Activated CD4-positive, alpha-beta T cell treated with anti-CD3 and anti-CD28 coated beads, Interleukin-2, amount 10 ng/mL, durations not matched to agents 7 days and 5 days (primary cell): ENCODE measurements at regions of chr9 and their contacts with region 1.

Region 1: GRCh38 chr9:36407122-36407723 is 7.2 kb upstream of the RNF38 start:
- DNase-seq: peak; percentile 72
- H3K4me3 Mint-ChIP-seq: no peak overlapping the region
- H3K27ac Mint-ChIP-seq: peak overlapping the region; percentile 65
- H3K4me1 Mint-ChIP-seq: peaks cover 10% of the 10 kb centered on the region
- H3K27me3 Mint-ChIP-seq: no peaks in the 10 kb centered on the region

Region 2: DNA sequence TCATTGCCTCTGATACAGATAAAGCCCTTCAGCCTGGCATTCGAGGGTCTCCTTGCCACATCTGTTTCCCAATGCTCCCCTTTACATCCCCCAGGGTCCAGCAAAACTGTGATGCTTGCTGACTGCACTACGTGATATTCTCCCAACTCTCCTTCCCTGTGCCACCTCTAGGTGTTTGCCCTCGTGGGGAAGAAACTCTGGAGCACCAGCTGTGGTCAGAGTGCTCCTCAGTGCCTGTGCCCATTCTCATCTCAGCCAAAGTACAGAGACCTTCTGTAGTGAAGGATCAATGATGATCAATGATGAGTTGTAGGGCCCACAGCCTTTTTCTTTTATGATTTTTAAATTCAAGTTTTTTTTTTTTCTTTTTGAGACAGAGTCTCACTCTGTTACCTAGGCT is 125.1 kb after region 1 on chr9:
- CTCF ChIA-PET with region 1: no interaction called
- POLR2A ChIA-PET with region 1: interaction called, 10 read pairs
- DNase-seq: no peak
- H3K4me3 Mint-ChIP-seq: no peak overlapping the region
- H3K27ac Mint-ChIP-seq: no peak overlapping the region
- H3K4me1 Mint-ChIP-seq: no peaks in the 10 kb centered on the region
- H3K27me3 Mint-ChIP-seq: peaks cover 3% of the 10 kb centered on the region

Region 3: DNA sequence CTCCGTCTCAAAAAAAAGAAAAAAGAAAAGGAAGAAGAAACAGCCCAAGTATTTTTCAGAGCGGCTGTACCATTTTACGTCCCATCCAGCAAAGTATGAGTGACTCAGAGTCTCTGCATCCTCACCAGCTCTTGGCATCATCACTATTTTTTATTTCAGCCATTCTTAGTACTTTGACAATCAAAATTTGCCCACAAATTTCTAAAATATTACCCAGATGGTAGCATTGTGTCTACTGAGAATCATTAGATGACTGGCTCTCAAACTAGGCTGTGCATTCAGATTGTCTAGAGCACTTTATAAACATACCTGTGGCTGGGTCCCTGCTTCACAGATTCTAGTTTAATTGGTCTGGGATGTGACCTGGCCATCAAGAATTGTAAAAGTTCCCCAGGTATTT is 143.9 kb after region 1 on chr9:
- CTCF ChIA-PET with region 1: interaction called, 39 read pairs
- POLR2A ChIA-PET with region 1: no interaction called
- DNase-seq: no peak
- H3K4me3 Mint-ChIP-seq: no peak overlapping the region
- H3K27ac Mint-ChIP-seq: no peak overlapping the region
- H3K4me1 Mint-ChIP-seq: peaks cover 2% of the 10 kb centered on the region
- H3K27me3 Mint-ChIP-seq: peaks cover 21% of the 10 kb centered on the region

Region 4: DNA sequence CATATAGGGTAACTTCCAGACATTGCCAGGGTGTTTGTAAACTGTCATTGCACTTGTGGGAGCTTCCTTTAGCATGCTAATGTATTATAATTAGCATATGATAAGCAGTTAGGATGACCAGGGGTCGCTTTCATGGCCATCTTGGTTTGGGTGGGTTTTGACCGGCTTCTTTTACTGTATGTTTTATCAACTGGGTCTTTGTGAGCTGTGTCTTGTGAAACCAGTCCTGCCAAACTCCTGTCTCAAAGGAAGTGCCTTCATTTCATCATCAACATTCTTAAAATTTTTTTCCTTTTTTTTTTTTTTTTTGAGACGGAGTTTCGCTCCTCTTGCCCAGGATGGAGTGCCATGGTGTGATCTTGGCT is 153.6 kb after region 1 on chr9:
- CTCF ChIA-PET with region 1: interaction called, 39 read pairs
- POLR2A ChIA-PET with region 1: no interaction called
- DNase-seq: no peak
- H3K4me3 Mint-ChIP-seq: no peak overlapping the region
- H3K27ac Mint-ChIP-seq: no peak overlapping the region
- H3K4me1 Mint-ChIP-seq: peaks cover under 1% of the 10 kb centered on the region
- H3K27me3 Mint-ChIP-seq: peaks cover 8% of the 10 kb centered on the region

Region 5: DNA sequence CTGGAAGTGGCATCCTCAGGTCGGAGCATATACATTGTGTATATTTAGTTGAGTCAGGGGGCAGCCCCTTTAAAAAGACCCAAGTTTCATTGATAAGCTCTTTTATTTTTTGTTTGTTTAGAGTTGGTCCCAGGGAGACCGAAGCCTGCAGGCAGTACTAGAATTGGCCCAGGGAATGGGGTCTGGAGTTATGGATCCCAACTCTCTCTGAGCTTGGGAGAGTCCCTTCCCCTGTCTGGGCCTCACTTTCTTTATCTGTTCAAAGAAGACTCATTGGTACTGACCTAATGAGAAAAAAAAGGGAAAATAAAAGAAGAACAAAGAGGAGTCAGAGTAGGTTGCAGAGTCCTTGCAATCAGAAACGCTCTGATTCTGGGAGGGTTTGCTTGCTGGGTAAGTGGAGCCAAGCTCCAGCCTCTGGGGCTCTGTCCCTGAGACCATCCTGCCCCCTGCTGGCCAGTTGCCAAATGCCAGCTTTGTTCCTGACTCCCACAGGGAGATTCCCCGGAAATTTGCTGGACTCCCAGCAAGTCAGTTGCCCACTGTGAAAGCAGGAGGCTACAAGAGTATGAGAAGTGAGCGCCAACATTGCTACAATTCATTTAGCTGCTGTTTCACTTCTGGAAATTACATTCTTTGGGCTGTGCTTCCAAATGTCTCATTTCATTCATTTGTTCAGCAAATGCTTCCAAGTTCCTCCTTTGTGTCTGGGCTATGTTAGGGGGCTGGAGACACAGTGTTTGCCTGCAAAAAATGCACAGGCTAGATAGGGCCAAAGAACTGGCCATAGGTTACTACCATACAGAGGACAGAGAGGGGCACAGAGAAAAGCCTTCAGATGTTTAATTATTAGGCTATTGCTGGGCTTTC is 321.7 kb after region 1 on chr9:
- CTCF ChIA-PET with region 1: interaction called, 16 read pairs
- POLR2A ChIA-PET with region 1: no interaction called
- DNase-seq: peak; percentile 67
- H3K4me3 Mint-ChIP-seq: no peak overlapping the region
- H3K27ac Mint-ChIP-seq: no peak overlapping the region
- H3K4me1 Mint-ChIP-seq: peaks cover 6% of the 10 kb centered on the region
- H3K27me3 Mint-ChIP-seq: no peaks in the 10 kb centered on the region